Right ventricle myocardium inferior (tissue), 1 donor: ENCODE measurements at regions of chr2 and their contacts with region 1.

Region 1: GRCh38 chr2:200713003-200713703 is 98.6 kb upstream of the BZW1 start:
- DNase-seq: peak; percentile 89
- ATAC-seq: peak; percentile 96

Region 2: GRCh38 chr2:200615247-200615646 is 97.9 kb before region 1 on chr2:
- intact Hi-C with region 1: no loop called
- DNase-seq: no peak
- ATAC-seq: no peak

Region 3: GRCh38 chr2:200811336-200812121 is 98.4 kb after region 1 on chr2 and contains the start of gene BZW1:
- intact Hi-C with region 1: loop called (anchors 1 kb)
- DNase-seq: peak; percentile 97
- ATAC-seq: peak; percentile 95
- total RNA-seq, gene BZW1: 80.4 TPM